ENCODE measurements at regions of chr12 and their contacts with region 1.

Region 1: GRCh38 chr12:110600254-110600653 is 13.7 kb upstream of the TCTN1 start:
- DNase-seq: no peak
- ATAC-seq: peak; percentile 46 to 77 (median 63)
- H3K4me3 ChIP-seq: no peak overlapping the region
- H3K27ac ChIP-seq: no peak overlapping the region
- H3K4me1 ChIP-seq: no peaks in the 10 kb centered on the region
- H3K27me3 ChIP-seq: no peaks in the 10 kb centered on the region
- CTCF ChIP-seq: peak; percentile 46

Region 2: DNA sequence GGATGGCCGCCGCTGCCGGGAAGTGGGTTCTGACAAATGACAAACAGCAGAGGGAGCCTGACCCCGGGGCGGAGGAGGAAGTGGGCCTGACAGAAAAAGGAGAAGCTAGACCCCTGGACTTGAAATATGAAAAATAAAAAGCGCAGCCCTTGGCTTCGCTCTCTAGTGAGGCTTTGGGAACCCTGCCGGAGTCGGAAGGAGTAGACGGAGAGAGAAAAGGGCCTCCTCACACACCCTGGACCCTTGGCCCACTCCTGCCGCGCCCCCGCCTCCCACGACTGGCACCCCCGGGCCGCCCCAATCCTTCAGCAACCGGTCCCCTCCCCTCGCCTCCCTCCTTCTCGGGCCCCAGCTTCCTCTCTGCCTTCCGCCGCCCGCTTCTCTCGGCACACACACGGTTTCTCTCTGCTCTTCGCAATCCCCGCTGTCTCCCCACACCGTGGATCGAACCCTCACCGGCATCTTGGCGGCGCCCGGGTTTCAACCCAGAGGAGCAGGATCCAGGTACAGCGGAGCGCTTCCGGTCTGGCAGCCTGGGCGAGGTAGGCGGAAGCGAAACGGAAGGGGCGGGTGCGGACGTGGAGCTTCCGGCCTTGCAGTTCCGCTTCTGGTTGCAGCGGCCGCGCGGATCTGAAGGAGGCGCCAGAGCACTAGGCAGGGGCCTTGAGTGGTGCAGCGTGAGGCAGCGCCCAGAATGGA is 150.3 kb before region 1 on chr12 and contains the start of gene ARPC3:
- intact Hi-C with region 1: loop called (anchors 5 kb)
- DNase-seq: peak; percentile 95 to 97
- ATAC-seq: peak; percentile 99
- H3K4me3 ChIP-seq: peak within 1 kb of the TSS; percentile 88
- H3K27ac ChIP-seq: peak within 1 kb of the TSS; percentile 89
- H3K4me1 ChIP-seq: peaks cover 9% of the 10 kb centered on the region
- H3K27me3 ChIP-seq: no peaks in the 10 kb centered on the region
- CTCF ChIP-seq: peak; percentile 92
- total RNA-seq, gene ARPC3: 52.7 to 71.6 (median 59.7) TPM

Region 3: GRCh38 chr12:110508071-110508586 is 92.1 kb before region 1 on chr12:
- intact Hi-C with region 1: loop called (anchors 1 to 2 kb)
- DNase-seq: no peak
- ATAC-seq: no peak
- H3K4me3 ChIP-seq: no peak overlapping the region
- H3K27ac ChIP-seq: no peak overlapping the region
- H3K4me1 ChIP-seq: no peaks in the 10 kb centered on the region
- H3K27me3 ChIP-seq: no peaks in the 10 kb centered on the region
- CTCF ChIP-seq: no peak

Region 4: GRCh38 chr12:110528277-110528839 is 71.9 kb before region 1 on chr12:
- intact Hi-C with region 1: loop called in 1 of 2 experiments (anchors 5 kb)
- DNase-seq: no peak
- ATAC-seq: peak in 3 of 4 donors; percentile 31 to 39 (median 35)
- H3K4me3 ChIP-seq: no peak overlapping the region
- H3K27ac ChIP-seq: no peak overlapping the region
- H3K4me1 ChIP-seq: peaks cover 19% of the 10 kb centered on the region
- H3K27me3 ChIP-seq: no peaks in the 10 kb centered on the region
- CTCF ChIP-seq: no peak

Region 5: GRCh38 chr12:110647631-110648040 is 47.4 kb after region 1 on chr12:
- intact Hi-C with region 1: no loop called
- DNase-seq: no peak
- ATAC-seq: no peak
- H3K4me3 ChIP-seq: no peak overlapping the region
- H3K27ac ChIP-seq: no peak overlapping the region
- H3K4me1 ChIP-seq: no peaks in the 10 kb centered on the region
- H3K27me3 ChIP-seq: no peaks in the 10 kb centered on the region
- CTCF ChIP-seq: no peak

Region 6: GRCh38 chr12:111850526-111850925 is 1250.3 kb after region 1 on chr12:
- intact Hi-C with region 1: no loop called
- DNase-seq: no peak
- ATAC-seq: no peak
- H3K4me3 ChIP-seq: no peak overlapping the region
- H3K27ac ChIP-seq: no peak overlapping the region
- H3K4me1 ChIP-seq: peaks cover 4% of the 10 kb centered on the region
- H3K27me3 ChIP-seq: no peaks in the 10 kb centered on the region
- CTCF ChIP-seq: no peak

Measured in psoas muscle (tissue), 8 donors.